ENCODE measurements at regions of chr12 and their contacts with region 1.

Region 1: GRCh38 chr12:47071241-47071852 is 8.1 kb upstream of the PCED1B start:
- H3K4me3 ChIP-seq: no peak overlapping the region
- H3K27ac ChIP-seq: no peak overlapping the region
- H3K4me1 ChIP-seq: no peaks in the 10 kb centered on the region
- CTCF ChIP-seq: 0 out of 2 replicates have a peak, but pooled peaks have one; percentile 5

Region 2: DNA sequence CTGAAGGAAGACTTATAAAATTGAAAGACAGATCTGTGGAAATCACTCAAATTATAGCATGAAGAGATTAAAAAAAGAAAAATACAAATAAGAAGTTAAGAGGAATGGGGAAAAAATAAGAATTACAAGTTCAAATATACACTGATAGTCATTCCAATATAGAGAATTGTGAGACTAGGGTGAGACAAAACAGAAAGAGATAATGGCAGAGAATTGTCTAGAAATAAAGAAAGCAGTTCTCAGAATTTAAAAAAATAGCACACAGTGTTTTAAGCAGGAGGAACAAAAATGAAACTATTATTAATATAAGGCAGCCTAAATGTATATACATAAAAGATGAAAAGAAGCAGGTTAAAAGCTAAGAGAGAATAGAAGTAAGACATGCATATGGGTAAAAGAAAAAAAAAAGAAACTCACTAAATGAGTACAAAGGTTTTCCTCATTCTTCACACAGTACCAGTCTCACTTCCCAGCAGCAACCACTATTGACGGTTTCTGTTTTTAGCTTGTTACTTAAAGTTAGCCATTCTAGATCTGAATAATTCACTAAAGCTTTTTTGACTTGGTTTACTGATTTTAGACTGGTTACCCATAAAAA is 276.7 kb before region 1 on chr12:
- CTCF ChIA-PET with region 1: no interaction called
- POLR2A ChIA-PET with region 1: no interaction called
- H3K4me3 ChIP-seq: no peak overlapping the region
- H3K27ac ChIP-seq: no peak overlapping the region
- H3K4me1 ChIP-seq: no peaks in the 10 kb centered on the region
- CTCF ChIP-seq: no peak

Region 3: GRCh38 chr12:47041327-47041726 is 30.0 kb before region 1 on chr12:
- CTCF ChIA-PET with region 1: interaction called, 12 read pairs
- POLR2A ChIA-PET with region 1: no interaction called
- H3K4me3 ChIP-seq: no peak overlapping the region
- H3K27ac ChIP-seq: no peak overlapping the region
- H3K4me1 ChIP-seq: no peaks in the 10 kb centered on the region
- CTCF ChIP-seq: no peak

Region 4: GRCh38 chr12:47095446-47096236 is 24.3 kb after region 1 on chr12:
- CTCF ChIA-PET with region 1: interaction called, 10 read pairs
- POLR2A ChIA-PET with region 1: no interaction called
- H3K4me3 ChIP-seq: no peak overlapping the region
- H3K27ac ChIP-seq: no peak overlapping the region
- H3K4me1 ChIP-seq: 0 out of 2 replicates have a peak, but pooled peaks cover 3% of the 10 kb centered on the region
- CTCF ChIP-seq: no peak

Measured in HEK293 (cell line).